SK-MEL-5 (cell line): ENCODE measurements at regions of chr22 and their contacts with region 1.

Region 1: GRCh38 chr22:36839356-36840073 is 21.3 kb upstream of the NCF4 start:
- DNase-seq: no peak

Region 2: GRCh38 chr22:36369922-36370791 is 469.4 kb before region 1 on chr22:
- in situ Hi-C with region 1: no loop called
- DNase-seq: no peak

Region 3: DNA sequence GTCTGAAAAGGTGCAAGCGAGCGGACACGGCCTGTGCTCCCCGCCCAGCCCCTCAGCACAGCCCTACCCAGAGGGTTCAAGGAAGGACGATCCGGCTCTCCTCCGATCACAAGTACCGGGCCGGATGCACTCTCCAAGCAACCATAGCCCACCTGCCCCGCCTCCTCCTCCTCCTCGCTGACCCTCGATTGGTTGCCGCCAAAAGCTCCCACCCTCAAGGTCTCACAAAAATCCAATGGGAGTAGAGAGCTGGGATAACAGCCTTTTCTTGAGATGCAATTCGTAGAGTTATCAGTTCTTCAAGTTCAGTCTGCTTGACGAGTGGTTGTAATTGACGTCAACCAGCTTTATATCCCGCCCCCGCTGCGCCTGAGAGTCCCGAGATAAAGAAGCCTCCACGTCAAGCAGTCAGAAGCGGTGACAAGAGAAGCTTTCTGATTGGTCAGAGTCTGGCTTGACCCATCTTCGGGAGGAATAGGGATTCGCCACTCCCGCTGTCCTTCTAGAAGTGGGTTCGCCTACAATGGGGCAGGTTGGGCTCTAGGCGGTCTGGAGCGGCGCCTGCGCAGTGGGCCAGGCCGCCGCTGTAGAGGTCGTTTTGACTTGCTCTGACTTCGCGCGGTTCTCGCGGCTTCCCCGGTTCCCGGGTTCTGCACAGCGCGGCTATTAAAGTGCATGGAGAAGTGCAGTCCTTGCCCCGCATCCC is 63.4 kb before region 1 on chr22 and contains the start of gene IFT27:
- in situ Hi-C with region 1: loop called (anchors 10 kb)
- DNase-seq: peak; percentile 100
- total RNA-seq, gene IFT27: 18.9 and 20.2 TPM in 2 replicates